Activated CD4-positive, alpha-beta memory T cell treated with anti-CD3 and anti-CD28 coated beads, Interleukin-2, amount 10 ng/mL, durations not matched to agents 7 days and 5 days (primary cell): ENCODE measurements at regions of chr4 and their contacts with region 1.

Region 1: DNA sequence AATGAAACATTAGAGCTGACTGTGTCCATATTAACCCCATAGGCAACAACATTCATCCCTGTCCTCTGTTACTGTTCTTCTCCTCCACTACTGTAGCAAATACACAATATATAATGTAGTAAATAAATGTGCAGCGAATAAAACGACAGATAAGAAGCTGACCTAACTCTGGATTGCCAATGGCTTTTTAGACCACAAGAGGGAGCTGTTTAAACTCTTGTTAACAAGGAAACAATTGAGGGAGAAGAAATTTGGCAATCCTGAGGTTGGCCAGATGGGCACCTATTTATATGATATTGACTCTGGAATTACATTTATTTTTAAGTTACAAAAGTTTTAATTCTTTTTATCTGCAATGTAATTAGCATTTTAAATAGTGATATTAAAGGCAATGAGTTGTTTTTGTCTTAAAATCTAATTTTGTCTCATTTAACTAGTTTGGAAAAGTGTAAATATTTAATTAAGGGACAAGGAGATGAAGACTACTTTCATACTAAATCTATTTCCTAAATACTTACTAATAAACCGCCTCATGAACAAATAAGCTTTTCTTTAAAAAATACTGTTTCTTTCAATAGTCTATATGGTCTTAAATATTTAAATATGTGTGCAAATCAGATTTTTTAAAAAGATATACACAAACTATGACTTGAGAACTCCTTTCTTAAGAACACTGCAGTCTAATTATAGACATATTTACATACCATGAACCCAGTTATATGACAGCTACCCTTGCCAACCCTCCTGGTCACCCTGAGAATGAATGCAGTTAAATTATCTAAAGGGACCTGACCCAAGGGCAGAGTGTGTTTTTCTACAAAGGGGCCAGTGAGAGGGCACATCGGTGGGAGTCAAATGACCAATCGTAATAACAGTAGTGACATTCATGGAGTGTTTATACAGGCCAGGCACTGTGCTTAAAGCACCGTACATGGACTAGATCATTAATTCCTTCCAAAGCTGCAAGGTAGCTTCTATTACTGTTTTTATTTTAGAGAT is 52.9 kb upstream of the HPF1 start:
- DNase-seq: no peak
- H3K4me3 Mint-ChIP-seq: no peak overlapping the region
- H3K27ac Mint-ChIP-seq: no peak overlapping the region
- H3K4me1 Mint-ChIP-seq: no peaks in the 10 kb centered on the region
- H3K27me3 Mint-ChIP-seq: peaks cover 2% of the 10 kb centered on the region

Region 2: DNA sequence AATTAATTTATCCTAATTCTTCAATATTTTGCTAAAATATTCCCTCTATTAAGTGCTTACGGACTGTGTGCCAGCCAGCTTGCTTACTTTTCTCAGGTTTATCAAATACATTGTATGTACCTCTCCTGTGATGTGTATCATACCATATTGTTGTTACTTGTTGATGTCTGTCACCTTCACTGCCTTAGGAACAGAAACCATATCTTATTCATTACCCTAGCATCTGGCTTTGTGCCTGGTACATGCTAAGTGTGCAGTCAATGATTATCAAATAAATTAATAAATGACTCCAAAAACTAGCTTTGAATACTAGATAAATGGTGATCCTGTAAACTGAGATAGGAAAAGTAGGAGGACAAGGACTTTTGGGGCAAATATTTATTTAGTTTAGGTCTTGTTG is 183.3 kb before region 1 on chr4:
- CTCF ChIA-PET with region 1: no interaction called
- POLR2A ChIA-PET with region 1: no interaction called
- DNase-seq: no peak
- H3K4me3 Mint-ChIP-seq: no peak overlapping the region
- H3K27ac Mint-ChIP-seq: no peak overlapping the region
- H3K4me1 Mint-ChIP-seq: peaks cover 25% of the 10 kb centered on the region
- H3K27me3 Mint-ChIP-seq: no peaks in the 10 kb centered on the region

Region 3: GRCh38 chr4:169823685-169824084 is 13.1 kb after region 1 on chr4:
- CTCF ChIA-PET with region 1: no interaction called
- POLR2A ChIA-PET with region 1: no interaction called
- DNase-seq: peak; percentile 20
- H3K4me3 Mint-ChIP-seq: no peak overlapping the region
- H3K27ac Mint-ChIP-seq: no peak overlapping the region
- H3K4me1 Mint-ChIP-seq: peaks cover 4% of the 10 kb centered on the region
- H3K27me3 Mint-ChIP-seq: no peaks in the 10 kb centered on the region

Region 4: GRCh38 chr4:170047771-170048354 is 237.2 kb after region 1 on chr4:
- CTCF ChIA-PET with region 1: interaction called, 28 read pairs
- POLR2A ChIA-PET with region 1: no interaction called
- DNase-seq: peak; percentile 46
- H3K4me3 Mint-ChIP-seq: no peak overlapping the region
- H3K27ac Mint-ChIP-seq: no peak overlapping the region
- H3K4me1 Mint-ChIP-seq: no peaks in the 10 kb centered on the region
- H3K27me3 Mint-ChIP-seq: peaks cover 7% of the 10 kb centered on the region